Endothelial cell of umbilical vein (primary cell): ENCODE measurements at regions of chr17 and their contacts with region 1.

Region 1: GRCh38 chr17:34235389-34236028 is 19.6 kb upstream of the CCL2 start:
- DNase-seq: peak; percentile 97
- H3K4me3 ChIP-seq: no peak overlapping the region
- H3K27ac ChIP-seq: peak overlapping the region; percentile 78
- H3K4me1 ChIP-seq: peaks cover 54% of the 10 kb centered on the region
- H3K27me3 ChIP-seq: no peaks in the 10 kb centered on the region
- CTCF ChIP-seq: no peak
- POLR2A ChIP-seq: no peak

Region 2: GRCh38 chr17:34177642-34178041 is 57.9 kb before region 1 on chr17:
- CTCF ChIA-PET with region 1: no interaction called
- POLR2A ChIA-PET with region 1: no interaction called
- dilution Hi-C with region 1: no loop called
- intact Hi-C with region 1: loop called (anchors 1 kb)
- DNase-seq: peak; percentile 90
- H3K4me3 ChIP-seq: no peak overlapping the region
- H3K27ac ChIP-seq: peak overlapping the region; percentile 67
- H3K4me1 ChIP-seq: peaks cover 19% of the 10 kb centered on the region
- H3K27me3 ChIP-seq: peaks cover 21 to 25% of the 10 kb centered on the region in 2 experiments
- CTCF ChIP-seq: no peak
- POLR2A ChIP-seq: no peak

Region 3: DNA sequence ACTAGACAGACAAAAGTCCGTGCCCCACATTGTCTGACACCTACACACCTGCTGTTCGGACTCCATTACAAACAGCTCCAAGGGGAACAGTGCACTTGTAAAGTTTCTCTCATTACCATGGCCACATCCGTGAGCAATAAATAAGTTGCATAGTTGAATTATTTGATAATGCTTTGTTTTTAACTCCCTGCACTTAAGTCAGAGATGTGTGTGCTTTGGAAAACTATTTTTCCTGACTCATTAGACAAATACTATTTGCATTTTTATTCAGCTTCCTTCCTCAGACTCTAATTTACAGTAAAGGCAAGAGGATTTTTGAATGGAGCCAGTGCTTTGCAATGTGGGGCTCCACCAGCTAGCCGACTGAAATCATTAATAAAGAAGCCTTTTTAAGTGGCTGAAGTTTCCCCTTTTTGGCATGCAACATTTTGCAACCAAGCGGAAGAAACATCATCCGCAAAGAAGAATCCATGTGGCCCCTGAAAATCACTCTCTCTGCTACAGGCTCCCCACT is 13.1 kb after region 1 on chr17:
- CTCF ChIA-PET with region 1: interaction called, 6 read pairs
- POLR2A ChIA-PET with region 1: interaction called, 14 read pairs
- dilution Hi-C with region 1: no loop called
- intact Hi-C with region 1: loop called (anchors 1 kb)
- DNase-seq: peak; percentile 92
- H3K4me3 ChIP-seq: no peak overlapping the region
- H3K27ac ChIP-seq: peak overlapping the region; percentile 99
- H3K4me1 ChIP-seq: peaks cover 66% of the 10 kb centered on the region
- H3K27me3 ChIP-seq: no peaks in the 10 kb centered on the region
- CTCF ChIP-seq: no peak
- POLR2A ChIP-seq: no peak

Region 4: GRCh38 chr17:34300652-34301370 is 65.3 kb after region 1 on chr17:
- CTCF ChIA-PET with region 1: interaction called, 14 read pairs
- POLR2A ChIA-PET with region 1: no interaction called
- dilution Hi-C with region 1: no loop called
- intact Hi-C with region 1: loop called (anchors 1 kb)
- DNase-seq: peak; percentile 44
- H3K4me3 ChIP-seq: no peak overlapping the region
- H3K27ac ChIP-seq: no peak overlapping the region
- H3K4me1 ChIP-seq: peaks cover 7% of the 10 kb centered on the region
- H3K27me3 ChIP-seq: peaks cover 0 to 2% of the 10 kb centered on the region in 2 experiments
- CTCF ChIP-seq: no peak
- POLR2A ChIP-seq: no peak